Activated naive CD4-positive, alpha-beta T cell treated with anti-CD3 and anti-CD28 coated beads, Interleukin-2, amount 10 ng/mL, durations not matched to agents 7 days and 5 days (primary cell): ENCODE measurements at regions of chr15 and their contacts with region 1.

Region 1: GRCh38 chr15:85582131-85583079 is 202.0 kb downstream of the AKAP13 start:
- DNase-seq: peak; percentile 81
- H3K4me3 Mint-ChIP-seq: peak overlapping the region; percentile 70
- H3K27ac Mint-ChIP-seq: peak overlapping the region; percentile 97
- H3K4me1 Mint-ChIP-seq: peaks cover 77% of the 10 kb centered on the region
- H3K27me3 Mint-ChIP-seq: no peaks in the 10 kb centered on the region

Region 2: DNA sequence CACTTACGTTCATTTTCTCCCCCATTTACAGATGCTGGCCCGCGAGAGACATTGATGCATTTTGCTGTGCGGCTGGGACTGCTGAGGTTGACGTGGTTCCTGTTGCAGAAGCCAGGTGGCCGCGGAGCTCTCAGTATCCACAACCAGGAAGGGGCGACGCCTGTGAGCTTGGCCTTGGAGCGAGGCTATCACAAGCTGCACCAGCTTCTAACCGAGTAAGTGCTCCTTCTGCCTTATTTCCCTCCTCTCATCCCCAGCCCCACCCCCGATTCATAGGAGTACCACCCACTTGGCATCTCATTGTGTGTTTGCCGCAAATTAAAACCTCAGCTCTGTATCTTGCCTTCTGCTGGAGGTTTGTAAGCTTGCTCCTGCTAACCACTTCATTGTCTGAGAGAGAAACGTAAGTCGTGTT is 38.7 kb before region 1 on chr15:
- CTCF ChIA-PET with region 1: interaction called, 26 read pairs
- DNase-seq: peak; percentile 66
- H3K4me3 Mint-ChIP-seq: no peak overlapping the region
- H3K27ac Mint-ChIP-seq: peak overlapping the region; percentile 42
- H3K4me1 Mint-ChIP-seq: peaks cover 77% of the 10 kb centered on the region
- H3K27me3 Mint-ChIP-seq: no peaks in the 10 kb centered on the region